Vagina (tissue), 2 donors: ENCODE measurements at regions of chr2 and their contacts with region 1.

Region 1: DNA sequence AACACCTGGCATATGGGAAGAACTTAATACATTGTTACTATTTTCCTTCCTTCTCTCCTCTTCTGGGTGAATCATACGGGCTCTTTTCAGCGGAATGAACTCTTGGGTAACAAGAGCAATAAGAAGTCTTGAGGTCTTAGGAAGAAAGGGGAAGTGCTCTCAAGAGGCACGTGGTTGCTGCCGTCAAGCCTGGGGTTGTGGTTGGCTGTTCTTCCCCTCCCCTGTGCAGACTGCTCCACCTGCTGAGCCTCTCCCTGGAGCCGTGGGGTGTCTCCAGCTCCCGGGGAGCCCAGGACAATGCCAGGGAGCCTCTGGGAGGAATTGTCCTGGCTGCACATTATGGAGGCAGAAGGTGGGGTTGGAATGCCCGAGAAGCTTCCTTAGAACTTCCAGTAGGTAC is 19.4 kb downstream of the TOGARAM2 start:
- DNase-seq: no peak
- H3K4me3 ChIP-seq: no peak overlapping the region
- H3K27ac ChIP-seq: no peak overlapping the region
- H3K4me1 ChIP-seq: peaks cover 4% of the 10 kb centered on the region
- H3K27me3 ChIP-seq: no peaks in the 10 kb centered on the region
- CTCF ChIP-seq: no peak
- POLR2A ChIP-seq: no peak

Region 2: GRCh38 chr2:29080886-29081743 is 80.6 kb after region 1 on chr2:
- intact Hi-C with region 1: loop called (anchors 5 kb)
- DNase-seq: peak in 1 of 2 donors; percentile 79
- H3K4me3 ChIP-seq: no peak overlapping the region
- H3K27ac ChIP-seq: no peak overlapping the region
- H3K4me1 ChIP-seq: no peaks in the 10 kb centered on the region
- H3K27me3 ChIP-seq: no peaks in the 10 kb centered on the region
- CTCF ChIP-seq: no peak
- POLR2A ChIP-seq: no peak